Activated T-helper 1 cell treated with anti-CD3 and anti-CD28 coated beads, Interleukin-12 subunit alpha, Interleukin-12 subunit beta, Interleukin-2, Interleukin-4 antibody, amounts not matched to agents 30 ng/mL and 10 ng/mL and 1 ng/mL, durations not matched to agents 14 hours and 24 hours and 36 hours (primary cell): ENCODE measurements at regions of chr6 and their contacts with region 1.

Region 1: DNA sequence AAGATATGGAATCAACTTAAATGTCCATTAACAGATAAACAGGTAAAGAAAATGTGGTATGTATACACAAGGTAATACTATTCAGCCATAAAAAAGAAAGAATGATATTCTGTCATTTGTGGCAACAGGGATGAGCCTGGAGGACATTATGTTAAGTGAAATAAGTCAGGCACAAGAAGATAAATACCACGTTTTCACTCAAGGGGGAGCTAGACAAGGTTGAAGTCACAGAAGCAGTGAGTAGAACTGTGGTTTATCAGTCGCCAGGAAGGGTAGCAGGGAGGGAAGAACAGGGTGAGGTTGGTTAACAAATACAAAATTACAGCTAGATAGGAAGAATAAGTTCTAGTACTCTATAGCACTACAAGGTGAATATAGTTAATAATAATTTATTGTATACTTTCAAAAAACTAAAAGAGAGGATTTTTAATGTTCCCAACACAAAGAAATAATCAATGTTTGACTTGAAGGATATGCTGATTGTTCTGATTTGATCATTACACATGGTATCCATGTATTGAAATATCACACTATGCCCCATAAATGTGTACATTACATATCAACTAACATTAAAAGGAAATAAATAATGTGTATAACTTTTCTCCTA is 21.1 kb downstream of the RTN4IP1 start:
- DNase-seq: no peak
- H3K4me3 Mint-ChIP-seq: no peak overlapping the region
- H3K27ac Mint-ChIP-seq: no peak overlapping the region
- H3K4me1 Mint-ChIP-seq: peaks cover 9% of the 10 kb centered on the region
- H3K27me3 Mint-ChIP-seq: no peaks in the 10 kb centered on the region

Region 2: DNA sequence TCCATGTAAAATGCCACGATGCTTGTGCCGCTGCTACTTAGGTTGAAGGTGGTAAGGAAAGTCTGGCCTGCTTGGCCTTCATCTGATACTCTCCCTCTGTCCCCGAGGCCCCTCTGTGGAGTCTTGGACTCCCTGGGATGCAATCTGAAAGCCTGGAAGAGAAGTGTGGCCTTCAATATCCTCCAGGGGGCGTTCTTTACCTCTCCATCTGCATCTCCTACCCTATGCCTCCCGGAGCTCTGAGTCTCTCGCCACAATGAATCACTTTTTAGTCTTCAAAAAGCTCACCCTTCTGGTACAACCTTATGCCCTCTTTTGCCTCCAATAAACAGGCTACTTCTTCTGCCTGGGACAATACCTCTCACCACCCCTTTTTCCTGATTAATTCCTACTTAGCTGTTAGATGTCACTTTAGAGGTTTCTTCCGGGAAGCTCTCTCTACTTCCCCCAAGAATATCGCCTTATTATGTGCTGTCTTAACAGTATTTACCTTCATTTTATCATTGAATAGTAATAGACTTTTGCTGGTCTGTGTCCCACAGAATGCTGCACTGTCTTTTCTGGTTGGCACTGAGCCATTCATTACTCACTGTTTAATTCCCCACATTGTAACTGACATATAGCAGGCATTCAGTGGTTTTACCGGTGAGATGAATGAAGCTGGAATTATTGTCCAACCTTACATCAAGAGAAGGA is 268.7 kb before region 1 on chr6:
- intact Hi-C with region 1: loop called (anchors 5 kb)
- DNase-seq: peak; percentile 27
- H3K4me3 Mint-ChIP-seq: no peak overlapping the region
- H3K27ac Mint-ChIP-seq: no peak overlapping the region
- H3K4me1 Mint-ChIP-seq: peaks cover 8% of the 10 kb centered on the region
- H3K27me3 Mint-ChIP-seq: peaks cover 18% of the 10 kb centered on the region

Region 3: DNA sequence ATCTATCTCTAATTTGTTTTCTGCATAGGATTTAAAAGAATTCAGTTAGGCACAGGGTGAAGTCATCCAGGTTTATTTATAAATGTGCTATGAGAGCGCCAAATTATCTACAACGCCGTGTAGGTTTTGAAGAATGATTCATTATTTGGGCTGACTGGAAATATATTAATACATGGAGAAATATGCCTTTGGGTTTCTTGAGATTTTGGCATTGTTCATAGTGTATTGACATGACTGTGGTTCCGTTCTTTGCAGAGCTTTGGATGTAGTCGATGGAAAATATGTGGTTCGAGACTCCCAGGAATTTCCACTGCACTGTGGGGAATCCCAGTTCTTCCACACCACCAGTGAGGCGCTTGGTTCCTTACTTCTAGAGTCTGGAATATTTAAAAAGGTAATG is 156.7 kb before region 1 on chr6:
- intact Hi-C with region 1: no loop called
- DNase-seq: no peak
- H3K4me3 Mint-ChIP-seq: no peak overlapping the region
- H3K27ac Mint-ChIP-seq: no peak overlapping the region
- H3K4me1 Mint-ChIP-seq: peaks cover 15% of the 10 kb centered on the region
- H3K27me3 Mint-ChIP-seq: peaks cover 4% of the 10 kb centered on the region

Region 4: DNA sequence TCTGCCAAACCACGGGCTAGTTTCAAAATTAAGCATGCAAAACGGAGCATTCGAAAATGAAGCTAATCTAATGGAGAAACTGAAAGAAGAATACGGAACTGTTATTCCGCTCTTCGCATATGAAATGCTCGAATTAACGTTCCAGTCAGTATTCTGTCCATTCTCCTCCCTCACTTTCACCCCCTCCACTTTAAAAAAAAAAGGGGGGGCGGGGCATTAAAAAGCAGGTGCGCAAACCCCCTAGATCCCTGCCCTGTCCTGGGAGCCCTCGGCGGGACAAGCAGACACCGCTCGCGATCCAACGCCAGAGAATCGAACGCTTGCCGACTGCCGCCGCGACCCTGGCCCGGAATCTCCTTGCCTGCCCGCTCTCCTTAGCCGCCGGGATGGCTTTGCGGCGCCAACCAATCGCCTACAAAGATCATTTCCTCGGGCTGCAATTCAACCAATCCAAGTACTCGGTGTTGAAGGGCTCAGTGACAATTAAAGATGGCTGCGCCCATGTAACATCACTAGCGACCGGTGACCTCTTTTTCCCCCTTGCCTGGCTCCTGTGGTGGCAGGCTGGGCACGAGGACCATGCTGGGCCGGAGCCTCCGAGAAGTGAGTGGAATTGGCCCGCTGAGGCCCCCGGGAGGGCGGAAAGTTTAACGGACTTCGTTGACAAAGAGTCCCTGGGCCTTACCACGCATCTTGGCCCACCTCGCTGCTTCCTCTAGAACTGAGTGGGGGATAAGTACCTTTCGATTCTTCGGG is 21.1 kb after region 1 on chr6 and contains the starts of genes QRSL1 and RTN4IP1:
- intact Hi-C with region 1: loop called (anchors 1 kb)
- DNase-seq: peak; percentile 84
- H3K4me3 Mint-ChIP-seq: peak within 1 kb of the TSS; percentile 95
- H3K27ac Mint-ChIP-seq: peak within 1 kb of the TSS; percentile 98
- H3K4me1 Mint-ChIP-seq: peaks cover 33% of the 10 kb centered on the region
- H3K27me3 Mint-ChIP-seq: no peaks in the 10 kb centered on the region
- total RNA-seq, gene QRSL1: 18.6 and 21.9 TPM in 2 replicates
- total RNA-seq, gene RTN4IP1: 6.4 and 6.8 TPM in 2 replicates

Region 5: DNA sequence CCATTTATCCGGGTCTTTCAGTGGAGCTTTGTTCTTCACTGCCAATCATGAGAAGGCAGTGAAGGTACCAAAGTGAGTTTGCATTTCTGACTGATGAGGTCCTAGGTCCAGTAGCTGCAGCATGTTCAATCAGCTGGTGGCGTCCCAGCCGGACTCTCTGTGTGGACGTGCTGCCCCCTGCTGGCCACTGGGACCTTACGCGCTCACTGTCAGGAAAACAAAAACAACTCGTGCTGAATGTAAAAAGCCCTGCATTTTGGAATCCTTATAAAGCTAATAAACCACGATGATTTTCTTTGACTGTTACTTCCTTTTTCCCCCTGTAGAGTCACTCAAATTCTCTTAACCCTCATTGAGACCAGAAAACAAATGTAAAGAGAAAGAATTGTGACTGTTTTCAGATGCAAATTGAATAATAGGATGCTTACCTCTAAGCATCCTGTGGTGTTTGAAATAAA is 371.3 kb after region 1 on chr6:
- intact Hi-C with region 1: loop called (anchors 1 kb)
- DNase-seq: peak; percentile 60
- H3K4me3 Mint-ChIP-seq: no peak overlapping the region
- H3K27ac Mint-ChIP-seq: no peak overlapping the region
- H3K4me1 Mint-ChIP-seq: no peaks in the 10 kb centered on the region
- H3K27me3 Mint-ChIP-seq: peaks cover 30% of the 10 kb centered on the region

Region 6: GRCh38 chr6:106997390-106998158 is 389.4 kb after region 1 on chr6:
- intact Hi-C with region 1: loop called (anchors 1 kb)
- DNase-seq: peak; percentile 23
- H3K4me3 Mint-ChIP-seq: no peak overlapping the region
- H3K27ac Mint-ChIP-seq: no peak overlapping the region
- H3K4me1 Mint-ChIP-seq: no peaks in the 10 kb centered on the region
- H3K27me3 Mint-ChIP-seq: peaks cover 4% of the 10 kb centered on the region